Lower leg skin (tissue), 4 donors: ENCODE measurements at regions of chr4 and their contacts with region 1.

Region 1: DNA sequence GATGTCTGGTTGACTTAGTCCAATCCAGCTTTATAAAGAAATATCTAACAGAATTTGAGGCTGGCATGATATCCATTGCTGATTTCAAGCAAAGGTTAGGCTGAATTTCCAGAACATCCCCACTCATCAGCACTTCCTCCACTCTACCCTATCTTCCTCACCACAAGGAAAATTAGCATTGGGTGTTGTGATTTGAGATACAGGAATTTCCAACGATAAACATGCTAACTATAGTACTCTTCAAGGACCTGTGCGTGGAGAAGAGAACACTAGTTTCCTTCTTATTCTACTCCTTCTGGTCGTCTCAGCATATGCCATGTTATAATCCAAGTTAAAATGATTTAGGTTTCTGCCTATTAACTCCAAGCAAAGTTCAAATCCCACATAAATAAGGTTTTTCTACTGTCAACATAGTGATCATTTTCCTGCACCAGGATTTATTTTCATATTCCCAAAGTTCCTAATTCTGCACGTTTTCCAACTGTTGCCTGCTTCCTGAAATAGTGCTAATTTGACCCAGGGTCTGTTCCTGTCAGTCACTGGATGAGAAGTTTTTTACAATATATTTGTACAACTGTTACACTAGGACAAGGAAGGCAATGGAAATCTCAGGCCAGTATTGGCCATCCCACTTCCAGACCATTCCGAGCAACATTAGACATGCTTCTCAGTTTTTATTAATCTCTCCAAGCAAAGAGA is 177.6 kb upstream of the EDNRA start:
- DNase-seq: no peak
- H3K4me3 ChIP-seq: no peak overlapping the region
- CTCF ChIP-seq: no peak
- POLR2A ChIP-seq: no peak

Region 2: DNA sequence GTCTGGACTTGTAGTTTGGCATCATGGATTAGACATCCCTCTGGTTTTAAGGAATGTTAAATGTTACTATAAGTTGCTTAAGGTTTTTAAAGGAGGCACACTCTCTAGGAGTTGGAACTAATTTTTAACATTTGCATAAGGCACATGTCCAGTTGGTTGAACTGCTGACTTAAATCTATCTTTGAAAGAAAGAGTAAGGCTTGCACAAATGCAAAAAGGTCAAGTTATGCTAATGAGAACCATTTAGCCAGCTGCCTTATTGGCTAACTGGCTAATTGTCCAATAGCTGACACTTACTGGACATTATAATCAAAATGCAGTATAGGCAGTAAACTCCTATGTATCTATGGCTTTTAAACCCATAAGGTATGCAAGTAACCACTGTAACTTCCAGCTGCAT is 151.6 kb before region 1 on chr4:
- intact Hi-C with region 1: no loop called
- DNase-seq: no peak
- H3K4me3 ChIP-seq: no peak overlapping the region
- CTCF ChIP-seq: no peak
- POLR2A ChIP-seq: no peak

Region 3: GRCh38 chr4:149279776-149280175 is 1976.5 kb after region 1 on chr4:
- intact Hi-C with region 1: loop called (anchors 5 kb)
- DNase-seq: no peak
- H3K4me3 ChIP-seq: no peak overlapping the region
- CTCF ChIP-seq: no peak
- POLR2A ChIP-seq: no peak